Activated naive CD4-positive, alpha-beta T cell treated with anti-CD3 and anti-CD28 coated beads, Interleukin-2, amount 10 ng/mL, durations not matched to agents 7 days and 5 days (primary cell): ENCODE measurements at regions of chr1 and their contacts with region 1.

Region 1: GRCh38 chr1:166910396-166910994 is 34.4 kb upstream of the TADA1 start:
- DNase-seq: peak; percentile 85
- H3K4me3 Mint-ChIP-seq: no peak overlapping the region
- H3K27ac Mint-ChIP-seq: no peak overlapping the region
- H3K4me1 Mint-ChIP-seq: peaks cover 26% of the 10 kb centered on the region
- H3K27me3 Mint-ChIP-seq: peaks cover 3% of the 10 kb centered on the region

Region 2: GRCh38 chr1:166838766-166839599 is 71.5 kb before region 1 on chr1 and contains the start of gene POGK:
- CTCF ChIA-PET with region 1: no interaction called
- DNase-seq: peak; percentile 90
- H3K4me3 Mint-ChIP-seq: peak within 1 kb of the TSS; percentile 90
- H3K27ac Mint-ChIP-seq: peak within 1 kb of the TSS; percentile 89
- H3K4me1 Mint-ChIP-seq: peaks cover 40% of the 10 kb centered on the region
- H3K27me3 Mint-ChIP-seq: peaks cover 10% of the 10 kb centered on the region

Region 3: GRCh38 chr1:166875734-166876539 is 34.6 kb before region 1 on chr1 and contains the start of gene TADA1:
- CTCF ChIA-PET with region 1: interaction called, 15 read pairs
- DNase-seq: peak; percentile 99
- H3K4me3 Mint-ChIP-seq: peak within 1 kb of the TSS; percentile 97
- H3K27ac Mint-ChIP-seq: peak within 1 kb of the TSS; percentile 99
- H3K4me1 Mint-ChIP-seq: peaks cover 55% of the 10 kb centered on the region
- H3K27me3 Mint-ChIP-seq: peaks cover 6% of the 10 kb centered on the region

Region 4: GRCh38 chr1:166884040-166884642 is 26.4 kb before region 1 on chr1:
- CTCF ChIA-PET with region 1: interaction called, 32 read pairs
- DNase-seq: peak; percentile 59
- H3K4me3 Mint-ChIP-seq: no peak overlapping the region
- H3K27ac Mint-ChIP-seq: no peak overlapping the region
- H3K4me1 Mint-ChIP-seq: peaks cover 20% of the 10 kb centered on the region
- H3K27me3 Mint-ChIP-seq: peaks cover 39% of the 10 kb centered on the region

Region 5: DNA sequence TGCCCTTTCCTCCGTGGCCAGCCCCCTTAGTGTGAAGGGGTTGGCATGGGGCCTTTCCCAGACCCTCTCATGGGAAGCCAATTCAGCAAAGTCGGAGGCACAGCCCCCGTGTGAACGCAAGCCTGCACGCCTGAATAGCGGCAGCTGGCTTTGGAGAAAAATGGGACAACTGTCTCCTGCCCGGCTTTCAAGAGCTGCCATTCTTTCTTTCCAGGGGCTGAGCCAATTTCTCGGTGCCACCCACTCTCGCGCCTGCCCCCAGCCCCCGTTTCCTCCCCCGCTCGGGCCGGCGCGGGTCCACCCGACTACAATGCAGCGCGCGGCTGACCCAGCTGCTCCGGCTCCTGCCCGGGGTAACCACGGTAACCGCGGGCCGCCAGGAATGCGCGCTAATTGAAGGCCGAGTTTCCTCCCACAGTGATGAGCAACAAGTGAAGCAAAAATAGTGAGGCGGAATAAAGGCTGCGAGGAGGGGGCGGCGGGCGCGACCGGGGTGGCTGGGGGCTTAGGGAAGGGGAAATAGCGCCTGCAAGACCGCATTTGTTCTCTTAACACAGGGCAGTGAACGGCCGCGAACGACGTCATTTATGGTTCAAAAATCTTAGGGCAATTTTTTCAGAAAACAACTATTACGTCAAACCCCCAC is 37.0 kb after region 1 on chr1:
- CTCF ChIA-PET with region 1: no interaction called
- DNase-seq: no peak
- H3K4me3 Mint-ChIP-seq: no peak overlapping the region
- H3K27ac Mint-ChIP-seq: no peak overlapping the region
- H3K4me1 Mint-ChIP-seq: peaks cover 26% of the 10 kb centered on the region
- H3K27me3 Mint-ChIP-seq: peaks cover 32% of the 10 kb centered on the region

Region 6: GRCh38 chr1:166975361-166976129 is 65.0 kb after region 1 on chr1 and contains the start of gene ILDR2:
- CTCF ChIA-PET with region 1: interaction called, 12 read pairs
- DNase-seq: peak; percentile 77
- H3K4me3 Mint-ChIP-seq: peak within 1 kb of the TSS; percentile 74
- H3K27ac Mint-ChIP-seq: peak within 1 kb of the TSS; percentile 2
- H3K4me1 Mint-ChIP-seq: peaks cover 44% of the 10 kb centered on the region
- H3K27me3 Mint-ChIP-seq: peaks cover 52% of the 10 kb centered on the region

Region 7: DNA sequence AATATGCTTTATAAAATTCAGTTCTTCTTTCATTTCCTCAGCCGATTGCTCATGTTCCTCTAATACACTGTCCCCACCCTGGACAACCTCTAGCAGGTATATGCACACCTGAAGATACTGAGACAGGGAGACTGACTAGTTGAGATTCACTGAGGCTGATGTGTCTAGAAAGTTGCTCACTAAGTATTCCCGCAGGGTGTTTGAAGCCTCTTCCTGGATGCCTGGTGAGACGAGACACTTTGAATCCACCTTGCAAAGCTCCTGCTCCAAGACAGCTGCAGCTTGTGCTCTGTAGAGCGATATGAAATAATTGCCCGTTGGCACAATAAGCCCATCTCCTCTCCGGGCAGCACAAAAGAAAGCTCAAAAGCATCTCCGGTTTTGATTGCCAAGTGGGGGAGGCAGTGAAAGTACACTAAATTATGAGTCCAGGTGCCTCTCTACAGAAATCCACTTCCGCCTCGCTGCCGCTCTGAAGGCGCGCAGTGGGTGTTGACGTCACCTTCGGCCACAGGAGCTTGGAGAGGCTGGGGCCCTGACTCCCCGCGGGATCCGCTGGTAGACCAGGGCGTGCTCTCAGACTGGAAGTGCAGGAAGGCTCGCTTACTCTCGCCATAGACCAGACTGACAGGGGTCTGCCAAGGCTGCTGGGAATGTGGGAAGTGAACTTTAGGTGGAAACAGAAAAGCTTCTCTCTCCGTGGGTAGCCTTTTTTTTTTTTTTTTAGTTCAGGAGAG is 133.4 kb after region 1 on chr1:
- CTCF ChIA-PET with region 1: interaction called, 10 read pairs
- DNase-seq: peak; percentile 87
- H3K4me3 Mint-ChIP-seq: peak overlapping the region; percentile 76
- H3K27ac Mint-ChIP-seq: peak overlapping the region; percentile 86
- H3K4me1 Mint-ChIP-seq: peaks cover 20% of the 10 kb centered on the region
- H3K27me3 Mint-ChIP-seq: peaks cover 31% of the 10 kb centered on the region

Region 8: DNA sequence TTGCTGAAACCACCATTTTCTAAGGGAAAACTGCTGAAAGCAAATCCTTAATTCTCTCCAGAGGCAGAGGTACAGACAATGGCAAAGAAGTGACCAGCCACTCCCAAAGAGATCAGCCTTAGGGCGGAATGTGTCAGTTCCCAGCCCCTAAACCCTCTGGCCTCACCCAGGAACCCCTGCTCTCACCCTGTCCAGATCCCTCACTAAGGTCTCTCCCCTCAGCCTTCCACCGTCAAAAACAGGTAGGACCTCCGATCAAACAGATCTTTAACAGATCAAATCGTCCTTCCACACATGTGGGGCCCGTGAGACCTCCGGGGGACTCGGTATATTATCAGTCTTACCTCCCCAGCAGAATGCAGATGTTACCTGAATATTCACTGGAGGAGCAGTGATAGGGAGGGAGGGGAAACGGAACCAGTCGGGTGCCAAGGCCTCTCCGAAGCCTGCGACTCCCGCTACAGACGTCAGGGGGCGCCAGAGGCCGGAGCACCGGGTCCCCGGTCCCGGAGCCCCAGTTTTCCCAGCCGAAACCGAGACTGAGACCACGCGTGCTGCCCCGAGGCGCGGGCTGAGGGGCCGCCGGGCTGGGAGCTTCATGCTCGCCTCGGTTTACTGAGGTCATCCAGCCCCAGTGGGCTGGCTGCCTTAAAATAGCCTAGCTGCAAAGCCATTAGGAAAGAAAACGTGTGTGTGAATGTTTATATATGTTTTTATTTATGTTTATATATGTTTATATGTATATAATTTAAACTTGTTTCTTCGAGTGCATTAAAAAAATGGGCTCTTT is 156.0 kb after region 1 on chr1:
- CTCF ChIA-PET with region 1: interaction called, 682 read pairs
- DNase-seq: peak; percentile 84
- H3K4me3 Mint-ChIP-seq: no peak overlapping the region
- H3K27ac Mint-ChIP-seq: no peak overlapping the region
- H3K4me1 Mint-ChIP-seq: no peaks in the 10 kb centered on the region
- H3K27me3 Mint-ChIP-seq: peaks cover 3% of the 10 kb centered on the region

Region 9: DNA sequence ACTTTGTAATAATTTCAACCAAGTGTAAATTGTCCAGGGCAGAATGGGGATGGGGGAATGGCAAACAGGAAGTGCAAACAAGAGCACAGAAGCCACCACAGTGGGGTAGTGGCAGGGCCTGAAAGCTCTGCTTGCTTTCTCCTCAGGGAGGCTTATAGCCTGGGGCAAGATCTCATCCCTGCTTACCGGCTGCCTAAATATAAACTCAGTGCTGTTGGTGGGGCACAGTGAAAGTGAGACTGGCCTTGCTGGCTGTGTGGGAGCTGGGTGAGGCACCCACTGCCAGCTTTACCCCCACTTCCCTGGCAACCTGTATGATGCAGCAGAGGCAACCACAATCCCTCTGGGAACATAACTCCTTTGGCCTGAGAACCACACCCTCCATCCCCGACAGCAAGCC is 198.6 kb after region 1 on chr1:
- CTCF ChIA-PET with region 1: no interaction called
- DNase-seq: peak; percentile 37
- H3K4me3 Mint-ChIP-seq: no peak overlapping the region
- H3K27ac Mint-ChIP-seq: no peak overlapping the region
- H3K4me1 Mint-ChIP-seq: peaks cover 65% of the 10 kb centered on the region
- H3K27me3 Mint-ChIP-seq: peaks cover 21% of the 10 kb centered on the region